ENCODE measurements at regions of chr16 and their contacts with region 1.

Region 1: GRCh38 chr16:50266337-50267091 is at the start of gene ADCY7:
- DNase-seq: peak; percentile 91
- H3K4me3 Mint-ChIP-seq: peak within 1 kb of the TSS; percentile 94
- H3K27ac Mint-ChIP-seq: peak within 1 kb of the TSS; percentile 97
- H3K4me1 Mint-ChIP-seq: peaks cover 71% of the 10 kb centered on the region
- H3K27me3 Mint-ChIP-seq: no peaks in the 10 kb centered on the region
- total RNA-seq, gene ADCY7: 100.0 to 107 TPM

Region 2: DNA sequence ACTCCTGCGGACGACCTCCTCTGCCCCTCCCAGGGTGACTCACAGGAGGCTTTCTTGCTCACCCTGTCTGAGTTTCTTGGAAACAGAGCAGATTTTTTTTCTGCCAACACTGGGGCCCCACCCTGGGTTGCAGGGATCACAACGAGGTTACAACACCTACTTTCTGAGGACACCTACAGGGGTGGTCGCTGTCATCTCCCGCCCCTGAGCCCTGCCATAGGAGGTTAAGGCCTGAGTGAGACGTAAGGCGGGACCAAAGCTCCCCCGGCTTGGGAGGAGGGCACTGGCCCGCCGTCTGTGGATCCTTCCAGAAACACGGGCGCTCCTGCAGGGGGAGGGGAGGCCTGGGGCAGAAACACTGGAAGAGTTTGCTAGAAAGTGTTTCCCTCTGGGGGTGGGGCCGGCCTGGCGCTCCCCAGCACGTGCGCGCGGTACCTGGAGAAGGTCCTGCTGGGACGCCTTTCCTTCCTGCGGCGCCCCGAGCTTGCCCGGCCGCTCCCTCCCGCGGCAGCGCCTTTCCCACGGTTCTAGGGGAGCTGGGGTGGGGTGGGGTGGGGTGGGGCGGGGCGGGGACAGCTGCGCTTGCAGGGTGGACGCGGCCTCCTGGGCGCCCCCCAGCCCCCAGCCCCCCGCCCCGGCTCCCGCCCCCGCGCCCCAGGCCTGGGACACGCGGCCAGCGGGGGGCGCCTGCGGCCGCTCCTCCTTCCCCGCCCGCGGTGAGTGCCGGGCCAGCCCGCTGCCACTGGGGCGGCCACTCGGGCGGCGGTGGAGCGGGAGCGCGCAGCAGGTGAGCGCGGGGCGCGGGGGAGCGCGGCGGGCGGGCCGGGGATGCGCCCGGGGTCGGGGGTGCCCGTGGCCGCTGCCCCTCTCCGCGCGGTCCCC is 20.9 kb before region 1 on chr16:
- CTCF ChIA-PET with region 1: interaction called, 3 read pairs
- POLR2A ChIA-PET with region 1: interaction called, 8 read pairs
- intact Hi-C with region 1: loop called (anchors 1 kb)
- DNase-seq: peak; percentile 82
- H3K4me3 Mint-ChIP-seq: peak overlapping the region; percentile 78
- H3K27ac Mint-ChIP-seq: peak overlapping the region; percentile 65
- H3K4me1 Mint-ChIP-seq: peaks cover 11% of the 10 kb centered on the region
- H3K27me3 Mint-ChIP-seq: no peaks in the 10 kb centered on the region

Measured in activated CD4-positive, alpha-beta memory T cell treated with anti-CD3 and anti-CD28 coated beads for 36 hours (primary cell).